MCF 10A (cell line): ENCODE measurements at regions of chr10 and their contacts with region 1.

Region 1: GRCh38 chr10:89502556-89502955 is 32.8 kb downstream of the SLC16A12 start:
- DNase-seq: peak; percentile 91
- H3K4me3 Mint-ChIP-seq: no peak overlapping the region
- H3K27ac Mint-ChIP-seq: peak overlapping the region; percentile 43
- H3K4me1 Mint-ChIP-seq: peaks cover 25% of the 10 kb centered on the region
- H3K27me3 Mint-ChIP-seq: no peaks in the 10 kb centered on the region
- CTCF ChIP-seq: no peak

Region 2: GRCh38 chr10:89314676-89315075 is 187.9 kb before region 1 on chr10:
- CTCF ChIA-PET with region 1: no interaction called
- POLR2A ChIA-PET with region 1: no interaction called
- intact Hi-C with region 1: no loop called
- DNase-seq: no peak
- H3K4me3 Mint-ChIP-seq: no peak overlapping the region
- H3K27ac Mint-ChIP-seq: no peak overlapping the region
- H3K4me1 Mint-ChIP-seq: no peaks in the 10 kb centered on the region
- H3K27me3 Mint-ChIP-seq: no peaks in the 10 kb centered on the region
- CTCF ChIP-seq: no peak

Region 3: DNA sequence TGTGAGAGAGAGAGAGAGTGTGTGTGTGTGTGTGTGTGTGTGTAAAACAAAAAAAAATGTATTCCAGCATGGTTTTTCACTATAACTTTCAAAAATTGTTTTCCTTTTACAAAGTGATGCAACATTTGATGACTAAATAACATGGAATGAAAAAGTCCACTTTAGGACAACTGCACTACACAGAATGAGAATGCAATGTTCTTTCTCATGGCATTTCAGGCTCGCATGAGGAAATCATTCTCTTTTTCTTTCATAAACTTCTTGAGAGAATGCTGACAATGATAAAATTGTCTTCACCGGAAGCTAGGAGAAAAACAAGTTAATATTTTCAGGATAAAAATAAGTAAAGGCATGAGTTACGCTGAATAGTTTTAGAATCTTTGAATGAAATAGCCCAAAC is 20.9 kb before region 1 on chr10:
- CTCF ChIA-PET with region 1: no interaction called
- POLR2A ChIA-PET with region 1: interaction called, 22 read pairs
- intact Hi-C with region 1: no loop called
- DNase-seq: peak; percentile 86
- H3K4me3 Mint-ChIP-seq: peak overlapping the region; percentile 28
- H3K27ac Mint-ChIP-seq: peak overlapping the region; percentile 99
- H3K4me1 Mint-ChIP-seq: peaks cover 52% of the 10 kb centered on the region
- H3K27me3 Mint-ChIP-seq: no peaks in the 10 kb centered on the region
- CTCF ChIP-seq: no peak

Region 4: DNA sequence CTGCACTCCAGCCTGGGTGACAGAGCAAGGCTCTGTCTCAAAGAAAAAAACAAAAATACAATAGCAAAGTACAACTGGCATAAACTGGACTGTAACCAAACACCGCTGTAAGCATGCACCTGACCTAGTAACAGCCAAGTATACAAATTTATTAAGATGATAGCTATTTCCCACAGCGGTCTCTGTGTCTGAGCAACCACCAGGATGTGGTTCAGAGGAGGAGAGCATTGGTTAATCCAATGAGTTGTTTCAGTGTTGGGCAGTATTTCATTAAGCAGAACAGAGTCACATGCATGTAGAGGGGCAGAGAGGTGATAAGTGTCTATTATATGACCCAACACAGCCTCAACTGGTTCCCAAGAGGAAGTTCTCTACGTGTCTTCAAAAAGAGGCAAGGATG is 28.8 kb after region 1 on chr10:
- CTCF ChIA-PET with region 1: no interaction called
- POLR2A ChIA-PET with region 1: interaction called, 12 read pairs
- intact Hi-C with region 1: no loop called
- DNase-seq: no peak
- H3K4me3 Mint-ChIP-seq: no peak overlapping the region
- H3K27ac Mint-ChIP-seq: no peak overlapping the region
- H3K4me1 Mint-ChIP-seq: peaks cover 13% of the 10 kb centered on the region
- H3K27me3 Mint-ChIP-seq: no peaks in the 10 kb centered on the region
- CTCF ChIP-seq: no peak

Region 5: GRCh38 chr10:89773081-89773480 is 270.5 kb after region 1 on chr10:
- CTCF ChIA-PET with region 1: no interaction called
- POLR2A ChIA-PET with region 1: no interaction called
- intact Hi-C with region 1: no loop called
- DNase-seq: no peak
- H3K4me3 Mint-ChIP-seq: no peak overlapping the region
- H3K27ac Mint-ChIP-seq: peak overlapping the region; percentile 29
- H3K4me1 Mint-ChIP-seq: peaks cover 17% of the 10 kb centered on the region
- H3K27me3 Mint-ChIP-seq: no peaks in the 10 kb centered on the region
- CTCF ChIP-seq: no peak